Panc1 (cell line): ENCODE measurements at regions of chr17 and their contacts with region 1.

Region 1: DNA sequence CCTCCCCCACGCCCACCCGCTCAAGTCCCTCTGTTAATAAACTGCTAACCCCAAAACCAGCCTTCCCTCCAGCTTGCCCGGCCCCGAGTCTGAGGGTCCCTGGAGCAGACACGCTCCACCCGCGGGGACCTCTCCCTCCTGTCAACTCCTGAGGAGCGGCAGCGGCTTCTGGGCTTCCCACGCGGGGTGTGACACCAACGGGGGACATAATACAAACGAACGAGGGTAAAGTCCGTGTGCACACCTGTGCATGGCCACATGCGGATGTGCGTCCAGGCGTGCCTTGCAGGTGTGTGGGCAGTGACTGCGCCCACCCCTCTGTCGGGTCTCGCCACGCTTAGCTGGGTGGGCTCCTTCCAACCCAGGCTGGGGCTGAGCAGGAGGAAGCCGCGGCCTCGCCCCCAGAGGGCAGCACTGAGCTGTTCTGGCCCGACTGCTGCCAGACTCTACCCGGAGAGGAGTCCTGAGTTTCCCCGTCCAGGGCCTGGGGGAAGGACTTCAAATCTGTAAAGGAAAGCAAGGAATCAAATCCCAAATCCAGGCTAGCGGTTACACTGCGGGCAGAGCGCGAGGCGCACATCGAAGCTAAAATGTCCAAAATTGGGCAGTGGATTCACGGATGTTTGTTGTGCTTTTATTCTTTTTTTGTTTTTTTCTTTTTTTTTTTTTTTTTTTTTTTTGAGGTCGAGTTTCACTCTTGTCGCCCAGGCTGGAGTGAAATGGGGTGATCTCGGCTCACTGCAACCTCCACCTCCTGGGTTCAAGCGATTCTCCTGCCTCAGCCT is 24.2 kb upstream of the KRT17 start:
- DNase-seq: peak; percentile 42
- ATAC-seq: peak; percentile 91
- H3K4me3 ChIP-seq: peak overlapping the region; percentile 21 to 56
- H3K27ac ChIP-seq: peak overlapping the region; percentile 44
- H3K4me1 ChIP-seq: peaks cover 21% of the 10 kb centered on the region
- H3K27me3 ChIP-seq: no peaks in the 10 kb centered on the region
- CTCF ChIP-seq: peak; percentile 88

Region 2: DNA sequence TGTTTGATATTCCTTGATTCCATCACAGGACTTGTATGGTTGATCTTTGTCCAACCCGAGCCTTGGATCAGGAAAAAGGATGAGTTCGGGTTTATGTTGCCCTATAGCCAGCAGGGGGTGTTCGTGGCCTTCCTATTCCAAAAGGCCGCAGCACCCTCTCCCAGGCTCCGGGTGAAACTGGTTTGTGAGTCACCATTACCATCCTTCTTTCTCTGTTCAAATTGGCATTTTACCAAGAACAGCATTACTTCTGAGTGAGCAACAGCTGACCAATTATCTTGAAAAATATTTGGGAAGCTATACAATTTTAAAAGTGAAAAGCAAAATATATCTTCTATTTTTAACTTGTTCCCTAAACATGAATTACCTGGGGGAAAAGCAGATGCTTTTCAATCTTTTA is 739.3 kb before region 1 on chr17:
- CTCF ChIA-PET with region 1: no interaction called
- POLR2A ChIA-PET with region 1: no interaction called
- in situ Hi-C with region 1: no loop called
- intact Hi-C with region 1: loop called (anchors 2 kb)
- DNase-seq: no peak
- ATAC-seq: peak; percentile 97
- H3K4me3 ChIP-seq: no peak overlapping the region
- H3K27ac ChIP-seq: peak overlapping the region; percentile 2; the same call in 1 of the 2 replicates
- H3K4me1 ChIP-seq: peaks cover 11% of the 10 kb centered on the region; the same call in 1 of the 2 replicates
- H3K27me3 ChIP-seq: no peaks in the 10 kb centered on the region; the same call in 1 of the 2 replicates
- CTCF ChIP-seq: peak; percentile 85

Region 3: GRCh38 chr17:41579484-41580243 is 68.9 kb before region 1 on chr17:
- CTCF ChIA-PET with region 1: interaction called, 23 read pairs
- POLR2A ChIA-PET with region 1: interaction called, 13 read pairs
- in situ Hi-C with region 1: no loop called
- intact Hi-C with region 1: no loop called
- DNase-seq: peak; percentile 59
- ATAC-seq: peak; percentile 94
- H3K4me3 ChIP-seq: peak overlapping the region in 1 of 2 experiments; percentile 52; a peak in 2 of 4 replicates
- H3K27ac ChIP-seq: peak overlapping the region; percentile 52
- H3K4me1 ChIP-seq: peaks cover 9% of the 10 kb centered on the region; the same call in 1 of the 2 replicates
- H3K27me3 ChIP-seq: no peaks in the 10 kb centered on the region
- CTCF ChIP-seq: peak; percentile 91

Region 4: DNA sequence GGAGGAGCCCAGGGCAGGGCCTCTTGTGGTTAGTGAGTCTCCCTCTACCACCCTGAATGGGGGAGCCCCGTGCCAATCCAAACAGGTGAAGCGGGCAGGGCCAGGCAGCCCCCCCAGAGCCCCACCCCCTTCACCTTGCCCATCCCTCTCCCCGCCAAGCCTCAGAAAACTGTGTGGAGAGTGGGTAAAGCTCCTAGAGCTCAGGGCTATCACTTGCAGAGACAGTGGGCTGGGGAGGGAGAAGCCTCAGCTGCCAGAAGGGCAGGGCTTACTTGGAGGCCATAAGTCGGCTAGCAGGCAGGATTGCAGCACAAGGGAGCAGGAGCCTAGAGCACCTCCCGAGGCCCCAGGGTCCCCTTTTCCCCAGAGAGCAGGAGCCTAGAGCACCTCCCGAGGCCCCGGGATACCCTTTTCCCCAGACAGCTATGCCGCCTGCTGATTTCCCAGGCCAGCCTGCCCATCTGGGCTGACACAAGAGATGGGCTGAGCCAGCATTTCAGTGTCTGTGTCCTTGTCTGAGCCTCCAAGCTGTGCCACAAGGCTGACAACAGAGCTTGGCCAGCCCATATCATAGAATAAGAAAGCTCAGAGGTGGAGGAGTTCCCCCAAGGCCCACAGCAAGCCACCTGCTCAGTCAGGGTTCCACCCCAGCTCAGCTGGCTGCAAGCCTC is 55.2 kb before region 1 on chr17:
- CTCF ChIA-PET with region 1: interaction called, 10 read pairs
- POLR2A ChIA-PET with region 1: no interaction called
- in situ Hi-C with region 1: no loop called
- intact Hi-C with region 1: loop called (anchors 5 kb)
- DNase-seq: no peak
- ATAC-seq: peak; percentile 61; the same call in 1 of the 2 replicates
- H3K4me3 ChIP-seq: no peak overlapping the region
- H3K27ac ChIP-seq: no peak overlapping the region
- H3K4me1 ChIP-seq: no peaks in the 10 kb centered on the region
- H3K27me3 ChIP-seq: no peaks in the 10 kb centered on the region
- CTCF ChIP-seq: no peak

Region 5: DNA sequence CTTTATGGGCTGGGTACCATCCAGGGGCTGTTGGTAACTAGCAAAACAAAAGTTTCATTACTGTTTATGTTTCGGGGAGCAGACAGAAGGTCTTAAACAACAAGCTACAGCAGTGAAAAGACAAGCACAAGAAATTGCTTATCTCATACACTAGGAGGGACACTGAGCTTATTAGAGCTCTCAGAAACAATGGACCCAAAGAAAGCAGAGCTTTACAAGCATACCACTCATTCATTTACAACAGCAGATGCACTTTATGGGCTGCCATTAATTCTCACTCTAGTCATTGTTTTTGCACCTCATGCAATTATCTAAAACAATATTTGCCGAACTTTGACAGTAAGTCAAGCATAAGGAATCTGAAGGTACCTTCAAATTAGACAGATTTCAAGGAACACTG is 46.1 kb before region 1 on chr17:
- CTCF ChIA-PET with region 1: interaction called, 17 read pairs
- POLR2A ChIA-PET with region 1: no interaction called
- in situ Hi-C with region 1: no loop called
- intact Hi-C with region 1: no loop called
- DNase-seq: no peak
- ATAC-seq: peak; percentile 91
- H3K4me3 ChIP-seq: no peak overlapping the region
- H3K27ac ChIP-seq: peak overlapping the region; percentile 70
- H3K4me1 ChIP-seq: peaks cover 18% of the 10 kb centered on the region
- H3K27me3 ChIP-seq: no peaks in the 10 kb centered on the region
- CTCF ChIP-seq: no peak

Region 6: DNA sequence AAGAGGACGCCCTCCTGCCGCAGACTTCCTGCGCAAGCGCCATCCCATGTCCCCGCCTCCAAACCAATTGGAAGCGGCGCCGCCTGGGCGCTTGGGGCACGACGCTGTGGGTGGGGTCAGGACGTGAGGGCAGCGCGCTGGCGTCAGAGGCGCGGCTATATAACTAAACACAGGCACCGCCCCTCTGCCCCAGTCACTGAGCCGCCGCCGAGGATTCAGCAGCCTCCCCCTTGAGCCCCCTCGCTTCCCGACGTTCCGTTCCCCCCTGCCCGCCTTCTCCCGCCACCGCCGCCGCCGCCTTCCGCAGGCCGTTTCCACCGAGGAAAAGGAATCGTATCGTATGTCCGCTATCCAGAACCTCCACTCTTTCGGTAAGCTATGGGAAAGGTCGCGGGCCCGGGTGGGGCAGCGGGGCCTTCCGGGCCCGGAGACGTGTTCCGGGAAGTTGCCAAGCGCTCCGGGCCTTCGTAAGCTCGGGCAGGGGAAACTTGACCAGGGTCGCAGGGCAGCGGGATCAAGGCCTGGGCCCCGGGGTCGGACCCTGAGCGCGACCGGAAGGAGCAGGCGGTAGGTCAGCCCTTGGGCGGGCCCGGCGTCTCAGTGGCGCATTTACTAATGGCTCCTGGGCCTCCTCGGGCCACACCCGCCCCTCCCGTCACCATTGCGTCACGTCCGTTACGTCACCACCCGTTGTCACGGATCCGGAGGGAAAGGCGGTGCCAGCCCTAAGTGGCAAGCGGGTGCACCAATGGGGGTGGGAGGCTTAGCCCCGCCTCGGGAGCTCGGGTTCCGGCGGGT is 40.3 kb after region 1 on chr17 and contains the start of gene EIF1:
- CTCF ChIA-PET with region 1: interaction called, 13 read pairs
- POLR2A ChIA-PET with region 1: interaction called, 9 read pairs
- in situ Hi-C with region 1: no loop called
- intact Hi-C with region 1: no loop called
- DNase-seq: peak; percentile 96
- ATAC-seq: peak; percentile 89
- H3K4me3 ChIP-seq: peak within 1 kb of the TSS; percentile 91 to 99
- H3K27ac ChIP-seq: peak within 1 kb of the TSS; percentile 100
- H3K4me1 ChIP-seq: peaks cover 22% of the 10 kb centered on the region
- H3K27me3 ChIP-seq: no peaks in the 10 kb centered on the region
- CTCF ChIP-seq: no peak
- total RNA-seq, gene EIF1: 747 TPM

Region 7: GRCh38 chr17:42039794-42040763 is 391.5 kb after region 1 on chr17:
- CTCF ChIA-PET with region 1: no interaction called
- POLR2A ChIA-PET with region 1: no interaction called
- in situ Hi-C with region 1: no loop called
- intact Hi-C with region 1: no loop called
- DNase-seq: no peak
- ATAC-seq: no peak; the same call in 1 of the 2 replicates
- H3K4me3 ChIP-seq: no peak overlapping the region
- H3K27ac ChIP-seq: no peak overlapping the region
- H3K4me1 ChIP-seq: no peaks in the 10 kb centered on the region
- H3K27me3 ChIP-seq: no peaks in the 10 kb centered on the region
- CTCF ChIP-seq: no peak